ENCODE measurements at regions of chr11 and their contacts with region 1.

Region 1: GRCh38 chr11:19561011-19561410 is 151.6 kb upstream of the NAV2 start:
- DNase-seq: no peak
- ATAC-seq: no peak
- H3K4me3 ChIP-seq: no peak overlapping the region
- H3K27ac ChIP-seq: no peak overlapping the region
- H3K4me1 ChIP-seq: peaks cover 6% of the 10 kb centered on the region
- H3K27me3 ChIP-seq: no peaks in the 10 kb centered on the region
- CTCF ChIP-seq: no peak
- POLR2A ChIP-seq: no peak

Region 2: DNA sequence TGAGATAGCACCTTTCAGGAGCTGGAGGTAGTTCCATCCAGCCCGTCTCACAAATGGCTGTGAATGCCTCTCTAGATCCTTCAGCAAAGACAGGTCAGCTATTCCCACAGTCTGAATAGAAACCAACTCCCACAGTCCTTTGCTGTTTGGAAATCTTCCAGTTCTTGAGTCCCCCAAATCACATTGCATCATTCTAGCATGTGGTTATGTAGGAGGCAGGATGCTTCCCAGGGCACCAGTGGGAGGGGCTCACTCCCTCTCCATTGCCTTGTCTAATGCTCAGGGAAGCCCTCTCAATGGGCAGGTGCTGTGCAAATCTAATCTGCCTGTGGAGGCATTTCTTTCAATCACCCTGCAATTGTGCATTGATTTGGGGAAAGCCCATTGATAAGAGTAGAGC is 166.2 kb after region 1 on chr11:
- intact Hi-C with region 1: no loop called
- DNase-seq: no peak
- ATAC-seq: no peak
- H3K4me3 ChIP-seq: no peak overlapping the region
- H3K27ac ChIP-seq: no peak overlapping the region
- H3K4me1 ChIP-seq: peaks cover 5% of the 10 kb centered on the region
- H3K27me3 ChIP-seq: no peaks in the 10 kb centered on the region
- CTCF ChIP-seq: no peak
- POLR2A ChIP-seq: no peak

Region 3: DNA sequence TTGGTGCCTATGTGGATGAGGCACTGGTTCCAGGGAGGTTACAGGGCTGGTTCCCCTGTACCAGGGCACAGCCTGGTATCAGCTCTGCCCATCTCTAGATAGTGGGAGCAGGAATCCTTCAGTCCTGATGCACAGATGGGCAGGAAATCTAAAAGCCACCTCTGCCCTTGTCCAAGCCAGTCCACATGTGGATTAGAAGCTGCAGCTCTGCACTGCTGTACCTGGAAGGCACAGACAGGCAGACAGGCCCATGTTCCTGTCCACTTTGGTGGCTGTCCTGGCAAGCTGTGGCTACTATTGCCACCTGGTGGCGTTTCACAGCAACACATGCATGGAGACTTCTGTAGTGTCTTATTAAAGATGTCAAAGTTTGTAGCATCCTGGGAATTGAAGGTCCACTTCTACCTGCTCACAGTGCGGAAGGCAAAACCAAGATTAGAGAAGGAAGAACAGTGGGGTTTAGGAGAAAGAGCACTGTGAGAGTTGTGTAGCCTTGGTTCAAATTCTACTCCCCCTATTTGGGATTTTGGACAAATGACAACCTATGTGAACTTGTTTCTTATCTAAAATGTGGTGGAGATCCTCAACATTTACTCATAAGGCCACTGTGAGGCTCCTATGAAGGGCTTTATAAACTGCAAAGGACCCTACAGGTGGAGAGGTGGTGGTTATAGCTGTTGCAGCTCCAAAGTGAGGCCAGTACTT is 181.7 kb after region 1 on chr11:
- intact Hi-C with region 1: loop called (anchors 2 kb)
- DNase-seq: peak; percentile 82 to 87 (median 86)
- ATAC-seq: peak; percentile 95
- H3K4me3 ChIP-seq: no peak overlapping the region
- H3K27ac ChIP-seq: no peak overlapping the region
- H3K4me1 ChIP-seq: peaks cover 4% of the 10 kb centered on the region
- H3K27me3 ChIP-seq: no peaks in the 10 kb centered on the region
- CTCF ChIP-seq: peak; percentile 69 to 96 (median 93)
- POLR2A ChIP-seq: no peak

Region 4: DNA sequence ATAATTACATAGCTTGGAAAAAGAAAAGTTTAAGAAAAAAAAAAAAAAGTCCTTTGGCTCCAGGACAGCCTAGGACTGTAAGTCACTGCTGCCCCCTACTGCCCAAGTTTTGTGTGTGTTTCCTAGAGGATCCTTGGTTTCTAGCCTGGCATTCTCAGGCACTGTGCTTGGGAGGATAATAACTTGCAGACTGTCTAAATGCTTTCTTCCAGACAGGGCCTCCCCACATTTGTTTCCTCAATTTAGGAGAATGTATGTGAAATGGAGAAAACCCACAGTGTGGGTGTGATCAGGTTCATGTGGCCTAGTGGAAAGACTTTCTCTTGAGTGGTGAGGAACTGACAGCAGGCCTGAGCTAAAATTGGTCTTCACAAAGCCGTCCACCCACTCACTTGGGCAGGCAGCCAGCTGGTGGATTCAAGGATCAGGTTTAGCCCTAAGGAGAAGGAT is 342.6 kb after region 1 on chr11:
- intact Hi-C with region 1: loop called (anchors 5 kb)
- DNase-seq: peak; percentile 85 to 91 (median 88)
- ATAC-seq: peak; percentile 83
- H3K4me3 ChIP-seq: no peak overlapping the region
- H3K27ac ChIP-seq: no peak overlapping the region
- H3K4me1 ChIP-seq: peaks cover 15% of the 10 kb centered on the region
- H3K27me3 ChIP-seq: no peaks in the 10 kb centered on the region
- CTCF ChIP-seq: peak; percentile 78 to 90 (median 81)
- POLR2A ChIP-seq: no peak